Mammary epithelial cell (primary cell): ENCODE measurements at regions of chr17 and their contacts with region 1.

Region 1: GRCh38 chr17:79231766-79232287 is 157.2 kb downstream of the ENGASE start:
- DNase-seq: peak; percentile 71
- H3K4me3 ChIP-seq: no peak overlapping the region
- H3K27ac ChIP-seq: peak overlapping the region; percentile 40
- H3K4me1 ChIP-seq: peaks cover 31% of the 10 kb centered on the region
- H3K27me3 ChIP-seq: no peaks in the 10 kb centered on the region
- CTCF ChIP-seq: no peak

Region 2: GRCh38 chr17:79252886-79253285 is 21.1 kb after region 1 on chr17:
- CTCF ChIA-PET with region 1: no interaction called
- dilution Hi-C with region 1: no loop called
- in situ Hi-C with region 1: no loop called
- intact Hi-C with region 1: loop called (anchors 1 kb)
- DNase-seq: no peak
- H3K4me3 ChIP-seq: no peak overlapping the region
- H3K27ac ChIP-seq: no peak overlapping the region
- H3K4me1 ChIP-seq: peaks cover 9% of the 10 kb centered on the region
- H3K27me3 ChIP-seq: no peaks in the 10 kb centered on the region
- CTCF ChIP-seq: no peak

Region 3: GRCh38 chr17:79305768-79306423 is 74.1 kb after region 1 on chr17:
- CTCF ChIA-PET with region 1: no interaction called
- dilution Hi-C with region 1: no loop called
- in situ Hi-C with region 1: no loop called
- intact Hi-C with region 1: no loop called
- DNase-seq: no peak
- H3K4me3 ChIP-seq: no peak overlapping the region
- H3K27ac ChIP-seq: no peak overlapping the region
- H3K4me1 ChIP-seq: no peaks in the 10 kb centered on the region
- H3K27me3 ChIP-seq: peaks cover 15% of the 10 kb centered on the region
- CTCF ChIP-seq: no peak